Activated CD4-positive, alpha-beta memory T cell treated with anti-CD3 and anti-CD28 coated beads for 36 hours (primary cell): ENCODE measurements at regions of chr12 and their contacts with region 1.

Region 1: GRCh38 chr12:124774462-124775167 is 89.0 kb downstream of the SCARB1 start:
- DNase-seq: peak; percentile 94
- H3K4me3 Mint-ChIP-seq: peak overlapping the region; percentile 23
- H3K27ac Mint-ChIP-seq: peak overlapping the region; percentile 91
- H3K4me1 Mint-ChIP-seq: peaks cover 45% of the 10 kb centered on the region
- H3K27me3 Mint-ChIP-seq: peaks cover 26% of the 10 kb centered on the region

Region 2: GRCh38 chr12:124388679-124389536 is 385.7 kb before region 1 on chr12:
- CTCF ChIA-PET with region 1: interaction called, 5 read pairs
- POLR2A ChIA-PET with region 1: no interaction called
- intact Hi-C with region 1: loop called (anchors 2 kb)
- DNase-seq: peak; percentile 79
- H3K4me3 Mint-ChIP-seq: peak overlapping the region; percentile 29
- H3K27ac Mint-ChIP-seq: no peak overlapping the region
- H3K4me1 Mint-ChIP-seq: peaks cover 35% of the 10 kb centered on the region
- H3K27me3 Mint-ChIP-seq: no peaks in the 10 kb centered on the region

Region 3: DNA sequence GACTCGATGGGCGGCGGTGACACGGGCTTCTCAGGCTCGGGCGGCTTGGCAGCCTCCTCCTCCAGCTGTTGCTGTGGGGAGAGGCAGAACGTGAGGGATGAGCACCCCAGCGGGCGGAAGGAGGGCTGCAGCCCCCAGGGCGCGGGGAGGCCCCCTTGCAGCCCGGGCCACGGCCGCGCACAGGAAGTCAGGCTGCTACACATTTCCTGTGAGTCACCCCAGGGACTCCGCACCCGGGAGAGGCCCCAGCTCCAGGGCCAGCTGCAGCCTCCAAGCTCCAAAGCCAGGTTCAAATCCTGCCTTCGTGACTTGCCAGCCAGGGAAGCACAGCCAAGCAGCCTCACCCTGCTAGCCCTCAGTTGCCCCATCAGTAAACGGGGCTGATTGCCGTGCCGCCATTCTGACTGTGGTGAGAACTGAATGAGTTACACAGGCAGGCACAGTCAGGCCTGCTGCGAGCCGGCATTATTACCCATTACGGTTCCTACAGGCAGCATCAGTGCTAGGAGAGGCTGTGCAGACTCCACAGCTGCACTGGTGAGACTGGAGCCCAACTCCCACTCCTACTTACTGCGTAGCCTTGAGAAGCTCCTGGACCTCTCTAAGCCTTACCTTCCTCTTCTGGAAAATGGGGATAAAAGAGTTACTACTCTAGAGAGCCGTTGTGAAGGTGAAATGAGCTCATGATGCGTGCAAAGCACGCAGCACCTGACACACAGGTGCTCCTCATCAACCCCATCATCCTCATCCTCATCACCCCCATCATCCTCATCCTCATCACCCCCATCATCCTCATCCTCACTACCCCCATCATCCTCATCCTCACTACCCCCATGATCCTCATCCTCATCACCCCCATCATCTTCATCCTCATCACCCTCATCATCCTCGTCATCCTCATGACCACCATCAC is 308.1 kb before region 1 on chr12:
- CTCF ChIA-PET with region 1: no interaction called
- POLR2A ChIA-PET with region 1: interaction called, 7 read pairs
- intact Hi-C with region 1: loop called (anchors 1 kb)
- DNase-seq: peak; percentile 94
- H3K4me3 Mint-ChIP-seq: peak overlapping the region; percentile 50
- H3K27ac Mint-ChIP-seq: peak overlapping the region; percentile 75
- H3K4me1 Mint-ChIP-seq: peaks cover 48% of the 10 kb centered on the region
- H3K27me3 Mint-ChIP-seq: no peaks in the 10 kb centered on the region

Region 4: GRCh38 chr12:124713436-124714082 is 61.1 kb before region 1 on chr12:
- CTCF ChIA-PET with region 1: no interaction called
- POLR2A ChIA-PET with region 1: no interaction called
- intact Hi-C with region 1: loop called (anchors 1 kb)
- DNase-seq: peak; percentile 78
- H3K4me3 Mint-ChIP-seq: peak overlapping the region; percentile 34
- H3K27ac Mint-ChIP-seq: peak overlapping the region; percentile 73
- H3K4me1 Mint-ChIP-seq: peaks cover 21% of the 10 kb centered on the region
- H3K27me3 Mint-ChIP-seq: peaks cover 9% of the 10 kb centered on the region

Region 5: DNA sequence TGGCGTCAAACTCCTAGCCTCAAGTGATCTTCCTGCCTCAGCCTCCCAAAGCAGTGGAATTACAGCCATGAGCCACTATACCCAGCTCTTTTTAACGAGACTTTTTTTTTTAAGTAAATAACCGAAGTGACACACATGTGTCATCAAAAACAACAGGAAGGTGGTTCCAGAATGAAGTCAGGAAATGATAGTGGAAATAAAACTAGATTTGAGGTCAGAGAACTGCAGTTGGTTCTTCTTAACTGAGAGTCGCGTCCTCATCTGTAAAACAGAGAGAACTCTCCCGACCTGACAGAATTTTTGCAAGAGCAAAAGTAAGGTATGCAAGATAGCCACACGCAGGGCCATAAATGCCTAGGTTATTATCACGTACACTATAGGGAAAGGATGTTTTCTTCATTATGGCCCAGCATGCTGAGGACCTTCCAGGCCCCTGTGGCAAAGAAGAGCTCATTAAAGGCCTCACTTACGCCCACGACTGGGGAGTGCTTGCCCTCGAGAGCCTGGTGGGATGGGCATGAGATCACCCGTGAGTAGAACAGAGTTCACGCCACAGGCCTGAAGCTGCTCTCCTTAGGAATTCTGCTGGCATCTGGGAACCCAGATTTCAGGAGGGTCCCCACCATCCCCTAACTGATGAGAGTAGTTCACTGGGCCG is 21.8 kb after region 1 on chr12:
- CTCF ChIA-PET with region 1: interaction called, 7 read pairs
- POLR2A ChIA-PET with region 1: interaction called, 7 read pairs
- intact Hi-C with region 1: loop called (anchors 1 kb)
- DNase-seq: no peak
- H3K4me3 Mint-ChIP-seq: no peak overlapping the region
- H3K27ac Mint-ChIP-seq: peak overlapping the region; percentile 51
- H3K4me1 Mint-ChIP-seq: peaks cover 24% of the 10 kb centered on the region
- H3K27me3 Mint-ChIP-seq: no peaks in the 10 kb centered on the region

Region 6: DNA sequence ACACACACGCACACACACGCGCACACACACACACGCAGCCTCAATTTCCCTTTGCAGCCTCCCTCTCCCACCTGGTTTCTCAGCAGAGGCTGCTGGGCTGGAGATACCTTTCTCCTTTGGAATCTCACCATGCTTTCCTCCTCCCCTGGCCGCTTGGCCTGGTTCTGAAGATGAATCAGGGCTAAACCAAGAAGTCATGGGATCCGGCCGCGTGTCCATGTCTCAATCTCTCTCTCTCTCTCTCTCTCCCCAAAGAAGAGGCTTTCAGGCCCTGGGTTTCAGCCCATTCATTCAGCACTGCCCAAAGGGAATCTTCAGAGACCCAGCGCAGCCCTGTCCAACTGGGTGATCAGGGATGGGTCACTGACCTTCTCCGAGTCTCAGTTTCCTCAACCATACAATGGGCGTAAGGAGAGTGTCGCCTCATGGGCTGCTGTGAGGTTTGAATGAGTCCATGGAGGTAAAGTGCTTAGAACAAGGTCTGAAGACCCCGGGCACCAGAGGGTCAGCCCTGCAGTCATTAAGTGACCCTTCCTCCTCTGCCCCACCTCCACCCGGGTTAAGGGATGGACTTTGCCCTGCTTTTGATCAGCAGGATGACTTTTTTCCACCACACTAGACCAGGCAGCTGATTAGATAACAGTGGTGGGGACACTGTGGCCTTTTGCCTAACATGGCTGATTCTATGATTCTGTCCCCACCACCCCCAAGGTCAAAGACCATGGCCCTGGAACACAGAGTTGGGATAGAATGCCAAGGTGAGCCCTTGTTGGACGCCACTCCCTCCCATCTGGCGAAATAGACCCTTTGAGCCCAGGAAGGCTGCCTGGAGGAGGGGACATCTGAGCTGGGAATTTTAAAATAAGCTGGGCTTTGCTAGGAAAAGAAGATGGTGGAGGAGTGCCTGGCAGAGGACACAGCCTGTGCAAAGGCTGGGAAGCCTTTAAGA is 46.9 kb after region 1 on chr12:
- CTCF ChIA-PET with region 1: no interaction called
- POLR2A ChIA-PET with region 1: no interaction called
- intact Hi-C with region 1: no loop called
- DNase-seq: no peak
- H3K4me3 Mint-ChIP-seq: no peak overlapping the region
- H3K27ac Mint-ChIP-seq: no peak overlapping the region
- H3K4me1 Mint-ChIP-seq: no peaks in the 10 kb centered on the region
- H3K27me3 Mint-ChIP-seq: no peaks in the 10 kb centered on the region

Region 7: GRCh38 chr12:124906606-124907261 is 132.1 kb after region 1 on chr12:
- CTCF ChIA-PET with region 1: interaction called, 9 read pairs
- POLR2A ChIA-PET with region 1: interaction called, 5 read pairs
- intact Hi-C with region 1: loop called (anchors 2 kb)
- DNase-seq: peak; percentile 90
- H3K4me3 Mint-ChIP-seq: no peak overlapping the region
- H3K27ac Mint-ChIP-seq: peak overlapping the region; percentile 25
- H3K4me1 Mint-ChIP-seq: peaks cover 24% of the 10 kb centered on the region
- H3K27me3 Mint-ChIP-seq: no peaks in the 10 kb centered on the region